Posterior vena cava (tissue), 2 donors: ENCODE measurements at regions of chr3 and their contacts with region 1.

Region 1: GRCh38 chr3:15768421-15769255 is 29.1 kb downstream of the ANKRD28 start:
- DNase-seq: no peak

Region 2: GRCh38 chr3:14822670-14823390 is 945.8 kb before region 1 on chr3:
- intact Hi-C with region 1: loop called in 1 of 2 experiments (anchors 10 kb)
- DNase-seq: no peak